Panc1 (cell line): ENCODE measurements at regions of chr1 and their contacts with region 1.

Region 1: GRCh38 chr1:156310962-156311361 is 11.9 kb upstream of the VHLL start:
- DNase-seq: no peak
- ATAC-seq: peak; percentile 43
- H3K4me3 ChIP-seq: no peak overlapping the region
- H3K27ac ChIP-seq: no peak overlapping the region
- H3K4me1 ChIP-seq: no peaks in the 10 kb centered on the region
- H3K27me3 ChIP-seq: no peaks in the 10 kb centered on the region
- CTCF ChIP-seq: no peak

Region 2: GRCh38 chr1:156121457-156121856 is 189.5 kb before region 1 on chr1:
- CTCF ChIA-PET with region 1: no interaction called
- POLR2A ChIA-PET with region 1: interaction called, 15 read pairs
- in situ Hi-C with region 1: no loop called
- intact Hi-C with region 1: no loop called
- DNase-seq: no peak
- ATAC-seq: no peak
- H3K4me3 ChIP-seq: peak overlapping the region in 1 of 2 experiments; percentile 58; a peak in 2 of 4 replicates
- H3K27ac ChIP-seq: peak overlapping the region; percentile 95
- H3K4me1 ChIP-seq: peaks cover 77% of the 10 kb centered on the region
- H3K27me3 ChIP-seq: no peaks in the 10 kb centered on the region
- CTCF ChIP-seq: no peak

Region 3: DNA sequence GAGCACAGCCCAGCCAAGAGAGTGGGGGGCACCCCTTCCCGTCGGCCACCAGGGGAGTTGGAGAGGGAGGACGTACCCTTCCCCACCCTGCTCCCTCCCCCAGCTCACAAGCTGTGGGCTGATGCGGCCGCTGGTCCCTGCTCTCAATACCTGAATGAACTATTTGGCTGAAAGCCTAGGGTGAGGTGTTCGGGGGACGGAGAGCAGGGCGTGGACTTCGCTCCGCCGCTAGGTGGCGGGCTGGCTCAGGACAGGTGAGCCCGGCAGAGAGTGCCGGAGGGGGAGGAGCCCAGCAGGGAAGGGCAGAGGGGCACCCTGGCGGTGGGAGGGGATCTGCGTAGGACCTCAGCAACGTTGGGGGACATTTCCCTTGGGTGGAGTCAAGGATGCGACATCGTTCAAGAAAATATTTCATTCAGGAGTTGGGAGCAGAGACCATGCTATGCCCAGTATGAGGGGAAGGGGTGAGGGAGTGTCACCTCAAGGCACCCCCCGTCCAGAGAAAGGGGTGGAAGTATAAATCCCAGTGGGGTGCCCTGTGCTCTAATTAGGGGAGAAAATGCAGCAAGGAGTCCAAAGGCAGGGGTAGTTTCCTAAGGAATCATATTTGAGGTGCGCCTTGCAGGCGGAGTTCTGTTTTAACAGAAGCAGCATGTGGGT is 46.0 kb after region 1 on chr1:
- CTCF ChIA-PET with region 1: no interaction called
- POLR2A ChIA-PET with region 1: interaction called, 10 read pairs
- in situ Hi-C with region 1: no loop called
- intact Hi-C with region 1: no loop called
- DNase-seq: no peak
- ATAC-seq: peak; percentile 95
- H3K4me3 ChIP-seq: no peak overlapping the region; a peak in 1 of 4 replicates
- H3K27ac ChIP-seq: no peak overlapping the region
- H3K4me1 ChIP-seq: no peaks in the 10 kb centered on the region
- H3K27me3 ChIP-seq: no peaks in the 10 kb centered on the region
- CTCF ChIP-seq: peak; percentile 98

Region 4: DNA sequence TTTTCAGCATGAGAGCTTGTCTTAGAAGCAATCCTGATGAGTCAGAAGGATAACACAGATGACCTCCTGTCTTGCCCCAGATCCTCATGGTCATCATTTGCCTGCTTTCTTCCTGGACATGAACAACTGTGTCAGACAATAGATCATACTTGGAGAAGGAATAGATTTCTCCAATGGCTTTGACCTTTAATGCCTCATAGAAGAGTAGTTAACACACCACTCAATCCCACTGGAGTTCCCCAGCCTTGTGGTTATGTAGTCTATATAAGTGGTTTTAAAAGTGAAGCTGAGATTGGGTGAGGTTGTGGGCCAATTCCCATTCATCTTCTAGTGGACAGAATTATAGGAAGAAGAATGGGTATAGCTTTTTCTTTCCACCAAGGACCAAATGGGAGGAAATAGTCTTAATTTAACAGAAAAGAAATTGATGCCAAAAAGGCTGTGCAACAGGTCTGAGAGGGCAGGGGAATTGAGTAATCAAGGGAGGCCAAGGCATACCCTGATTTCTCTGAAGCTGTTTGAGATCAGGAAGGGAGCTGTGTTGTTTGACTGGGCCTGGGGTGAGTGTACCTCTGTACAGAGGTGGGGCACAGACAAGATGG is 470.7 kb after region 1 on chr1:
- CTCF ChIA-PET with region 1: no interaction called
- POLR2A ChIA-PET with region 1: no interaction called
- in situ Hi-C with region 1: no loop called
- intact Hi-C with region 1: no loop called
- DNase-seq: no peak
- ATAC-seq: no peak
- H3K4me3 ChIP-seq: no peak overlapping the region
- H3K27ac ChIP-seq: no peak overlapping the region
- H3K4me1 ChIP-seq: 0 out of 2 replicates have a peak, but pooled peaks cover 5% of the 10 kb centered on the region
- H3K27me3 ChIP-seq: no peaks in the 10 kb centered on the region
- CTCF ChIP-seq: no peak